Heart right ventricle (tissue), 16 donors: ENCODE measurements at regions of chr15 and their contacts with region 1.

Region 1: GRCh38 chr15:50145451-50145872 is 26.4 kb upstream of the ATP8B4 start:
- DNase-seq: no peak
- ATAC-seq: peak in 7 of 8 donors; percentile 74 to 94 (median 83)
- H3K4me3 ChIP-seq: no peak overlapping the region
- H3K27ac ChIP-seq: no peak overlapping the region
- H3K4me1 ChIP-seq: peaks cover 0 to 15% (median 0%) of the 10 kb centered on the region in 9 donors
- H3K27me3 ChIP-seq: no peaks in the 10 kb centered on the region
- CTCF ChIP-seq: peak; percentile 45 to 75 (median 62)

Region 2: GRCh38 chr15:48352474-48353072 is 1792.9 kb before region 1 on chr15:
- intact Hi-C with region 1: loop called in 2 of 10 experiments (anchors 10 kb)
- DNase-seq: peak in 1 of 2 donors; percentile 29
- ATAC-seq: peak in 7 of 8 donors; percentile 55 to 81 (median 76)
- H3K4me3 ChIP-seq: no peak overlapping the region
- H3K27ac ChIP-seq: no peak overlapping the region
- H3K4me1 ChIP-seq: peaks cover 0 to 9% (median 0%) of the 10 kb centered on the region in 9 donors
- H3K27me3 ChIP-seq: no peaks in the 10 kb centered on the region
- CTCF ChIP-seq: peak; percentile 52 to 89 (median 79)

Region 3: GRCh38 chr15:48861813-48862431 is 1283.5 kb before region 1 on chr15:
- intact Hi-C with region 1: loop called (anchors 2 to 10 kb)
- DNase-seq: peak in 1 of 2 donors; percentile 33
- ATAC-seq: peak in 7 of 8 donors; percentile 51 to 80 (median 67)
- H3K4me3 ChIP-seq: no peak overlapping the region
- H3K27ac ChIP-seq: no peak overlapping the region
- H3K4me1 ChIP-seq: peaks cover 0 to 5% (median 0%) of the 10 kb centered on the region in 9 donors
- H3K27me3 ChIP-seq: no peaks in the 10 kb centered on the region
- CTCF ChIP-seq: peak; percentile 84 to 95 (median 90)

Region 4: GRCh38 chr15:49235446-49236124 is 909.9 kb before region 1 on chr15:
- intact Hi-C with region 1: loop called in 8 of 10 experiments (anchors 10 kb)
- DNase-seq: peak in 1 of 2 donors; percentile 46
- ATAC-seq: peak; percentile 64 to 85 (median 80)
- H3K4me3 ChIP-seq: no peak overlapping the region
- H3K27ac ChIP-seq: peak overlapping the region in 3 of 10 donors; percentile 3 to 52 (median 23)
- H3K4me1 ChIP-seq: peaks cover 0 to 52% (median 21%) of the 10 kb centered on the region in 9 donors
- H3K27me3 ChIP-seq: no peaks in the 10 kb centered on the region
- CTCF ChIP-seq: peak; percentile 46 to 82 (median 78)

Region 5: DNA sequence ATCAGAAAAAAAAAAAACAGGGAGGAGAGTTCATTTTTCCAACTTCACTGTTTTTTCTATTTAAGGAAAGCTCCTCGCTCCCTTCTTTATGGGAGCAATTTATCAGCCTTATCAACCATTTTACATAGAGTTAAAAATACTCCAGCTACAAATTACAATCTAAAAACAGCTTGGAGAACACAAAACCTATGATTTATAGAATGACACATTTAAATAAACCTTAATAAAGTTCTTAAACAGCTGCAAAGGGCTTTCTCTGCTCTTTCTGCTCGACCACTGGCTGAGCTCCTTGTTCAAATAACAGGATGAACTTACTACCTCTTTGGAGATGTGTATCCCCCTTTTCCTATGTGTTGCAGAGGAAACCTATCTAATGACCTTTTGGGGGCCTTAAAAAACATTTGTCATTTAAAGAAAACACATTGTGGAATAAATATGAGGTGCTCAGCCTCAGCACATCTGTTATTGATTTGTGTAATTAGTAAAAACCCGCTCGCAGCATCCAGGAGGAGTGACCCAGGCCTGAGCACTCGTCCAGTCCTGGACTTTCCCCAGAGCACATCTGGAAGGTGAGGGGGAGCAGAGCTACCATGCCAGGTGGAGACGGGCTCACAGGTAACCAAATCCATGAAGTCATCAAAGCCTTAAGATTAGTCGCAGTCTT is 257.7 kb before region 1 on chr15:
- intact Hi-C with region 1: loop called in 1 of 10 experiments (anchors 10 kb)
- DNase-seq: no peak
- ATAC-seq: no peak
- H3K4me3 ChIP-seq: no peak overlapping the region
- H3K27ac ChIP-seq: no peak overlapping the region
- H3K4me1 ChIP-seq: no peaks in the 10 kb centered on the region
- H3K27me3 ChIP-seq: no peaks in the 10 kb centered on the region
- CTCF ChIP-seq: no peak

Region 6: DNA sequence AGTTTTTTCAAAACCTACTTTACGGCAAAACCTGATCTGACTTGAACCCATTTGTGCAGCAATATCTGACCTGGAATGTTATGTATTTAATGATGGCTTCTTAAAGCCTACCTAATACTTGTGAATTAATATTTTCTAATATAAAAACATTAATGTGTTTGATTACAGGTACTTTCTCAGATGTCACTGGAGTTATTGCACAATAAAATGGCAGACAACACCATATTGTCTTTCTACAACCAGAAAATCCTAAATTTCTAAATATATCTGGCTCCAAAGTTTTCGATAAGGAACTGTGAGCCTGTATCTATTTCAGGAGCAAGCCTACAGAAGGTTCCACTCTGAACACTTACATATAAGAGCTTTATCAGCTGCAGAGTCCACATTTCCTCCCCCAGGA is 211.0 kb before region 1 on chr15:
- intact Hi-C with region 1: no loop called
- DNase-seq: no peak
- ATAC-seq: no peak
- H3K4me3 ChIP-seq: no peak overlapping the region
- H3K27ac ChIP-seq: peak overlapping the region in 1 of 10 donors; percentile 17
- H3K4me1 ChIP-seq: peaks cover 0 to 13% (median 0%) of the 10 kb centered on the region in 9 donors
- H3K27me3 ChIP-seq: no peaks in the 10 kb centered on the region
- CTCF ChIP-seq: no peak

Region 7: DNA sequence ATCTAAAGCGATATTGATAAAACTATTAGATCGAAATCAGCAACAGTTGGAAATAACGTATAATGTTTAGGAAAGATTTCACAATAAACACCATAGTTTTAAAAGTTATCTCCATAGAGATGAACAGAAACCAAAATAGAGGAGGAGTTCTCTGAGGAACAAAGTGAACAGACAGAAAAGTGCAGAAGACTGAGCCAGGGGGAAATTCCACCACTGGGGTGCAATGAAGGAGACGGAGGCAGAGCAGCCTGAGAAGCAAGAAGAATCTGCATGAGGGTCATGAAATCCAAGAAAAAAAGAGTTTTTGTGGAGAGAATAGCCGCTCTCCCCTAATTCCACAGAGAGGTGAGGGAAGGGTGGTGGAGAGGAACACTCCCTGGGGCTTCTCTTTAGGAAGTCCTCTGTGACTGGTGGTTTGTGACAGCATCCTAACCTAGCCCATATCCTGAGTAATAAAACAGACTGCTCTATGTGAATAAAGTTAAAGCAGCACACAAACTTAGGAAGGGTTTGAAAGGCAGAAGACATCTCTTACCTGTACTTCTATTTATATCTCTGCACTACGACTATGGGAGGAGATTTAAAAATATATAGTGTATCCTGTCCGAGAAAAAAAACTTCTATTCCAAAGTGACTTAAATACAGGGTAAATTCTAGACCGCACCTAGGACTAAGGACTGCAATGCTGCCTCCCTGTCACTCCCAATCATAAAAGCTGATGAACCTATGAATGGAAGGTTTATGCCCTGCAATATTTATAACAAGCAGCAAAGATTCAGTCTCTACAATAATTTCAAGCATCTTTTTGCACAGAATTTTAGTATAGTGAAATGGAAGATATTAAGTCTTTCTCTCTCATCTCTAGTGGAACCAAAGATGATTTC is 49.3 kb before region 1 on chr15:
- intact Hi-C with region 1: loop called in 1 of 10 experiments (anchors 10 kb)
- DNase-seq: no peak
- ATAC-seq: no peak
- H3K4me3 ChIP-seq: no peak overlapping the region
- H3K27ac ChIP-seq: peak overlapping the region in 1 of 10 donors; percentile 5
- H3K4me1 ChIP-seq: peaks cover 0 to 16% (median 0%) of the 10 kb centered on the region in 9 donors
- H3K27me3 ChIP-seq: no peaks in the 10 kb centered on the region
- CTCF ChIP-seq: no peak